ENCODE measurements at regions of chr5 and their contacts with region 1.

Region 1: DNA sequence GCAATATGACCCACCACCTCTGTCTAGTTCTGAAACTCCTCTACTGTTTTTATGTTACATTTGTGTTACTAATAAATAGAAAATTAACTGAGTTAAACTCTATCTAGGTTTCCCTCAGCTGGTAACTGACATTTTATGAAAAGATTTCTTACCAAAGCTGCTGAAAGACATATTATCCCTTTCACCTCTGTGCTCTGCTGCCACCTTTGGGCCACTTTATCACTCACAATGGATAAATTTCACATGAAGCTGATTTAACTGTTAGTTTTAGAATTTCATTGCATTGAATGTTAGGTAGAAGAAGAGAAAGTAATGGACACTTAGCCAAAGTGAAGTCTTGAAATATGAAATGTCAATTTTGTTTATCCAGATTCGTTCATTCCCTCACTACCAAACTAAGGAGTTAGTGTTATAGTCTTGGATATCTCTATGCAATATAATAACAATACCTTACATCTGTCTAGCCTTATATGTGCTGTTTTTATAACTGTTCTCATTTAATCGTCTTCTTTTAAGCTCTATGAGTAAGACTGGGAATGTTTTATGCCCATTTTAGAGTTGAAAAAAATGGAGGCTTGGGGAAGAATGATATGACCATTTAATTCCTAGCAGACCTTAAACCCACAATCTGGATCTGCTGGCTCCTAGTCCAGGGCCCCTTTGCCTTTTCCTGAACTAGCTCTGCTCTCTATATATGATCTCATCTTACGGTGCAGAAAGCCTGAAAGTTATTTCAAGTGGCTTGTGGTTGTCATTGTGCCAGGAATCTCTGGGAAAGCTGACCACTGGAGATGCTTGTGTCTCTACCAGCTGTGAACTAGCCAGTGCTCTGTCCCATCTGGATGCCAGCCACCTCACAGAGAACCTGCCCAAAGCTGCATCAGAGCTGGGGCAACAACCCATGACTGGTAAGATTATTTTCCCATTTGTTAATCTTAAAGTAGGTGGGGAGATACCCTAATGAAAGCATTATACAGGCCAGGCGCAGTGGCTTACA is 97.1 kb downstream of the GOLPH3 start:
- DNase-seq: peak; percentile 10
- H3K4me3 ChIP-seq: no peak overlapping the region
- H3K27ac ChIP-seq: no peak overlapping the region
- H3K27me3 ChIP-seq: peaks cover 9% of the 10 kb centered on the region
- CTCF ChIP-seq: peak; percentile 82

Region 2: DNA sequence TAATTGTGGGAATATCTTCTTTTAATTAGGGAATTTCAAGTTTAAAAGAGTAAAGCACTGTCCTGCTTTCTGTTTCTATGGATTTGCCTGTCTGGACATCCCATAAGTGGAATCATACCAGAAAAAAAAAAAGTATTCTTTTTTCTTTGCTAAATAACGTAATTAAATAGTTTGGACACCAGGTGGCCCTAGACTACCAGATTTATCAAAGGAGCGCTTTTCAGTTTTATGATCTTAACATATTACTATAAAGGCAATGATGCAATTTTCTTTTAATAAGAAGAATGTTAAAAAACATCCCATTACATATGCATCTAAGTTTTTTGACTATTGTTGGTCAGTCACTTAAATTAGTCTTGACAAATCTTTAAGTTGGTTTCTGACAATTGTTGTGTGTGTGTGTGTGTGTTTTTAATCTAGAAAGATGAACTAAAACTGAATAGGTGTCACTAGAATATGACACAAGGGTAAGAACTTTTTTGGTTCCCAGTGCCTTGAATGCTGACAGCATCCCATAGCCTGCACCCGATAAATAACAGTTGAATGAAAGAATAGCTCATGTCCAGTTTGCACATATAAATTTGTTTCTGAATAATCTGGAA is 495.4 kb before region 1 on chr5:
- CTCF ChIA-PET with region 1: interaction called, 12 read pairs
- POLR2A ChIA-PET with region 1: no interaction called
- DNase-seq: no peak
- H3K4me3 ChIP-seq: no peak overlapping the region
- H3K27ac ChIP-seq: no peak overlapping the region
- H3K27me3 ChIP-seq: peaks cover 10% of the 10 kb centered on the region
- CTCF ChIP-seq: peak; percentile 50

Region 3: DNA sequence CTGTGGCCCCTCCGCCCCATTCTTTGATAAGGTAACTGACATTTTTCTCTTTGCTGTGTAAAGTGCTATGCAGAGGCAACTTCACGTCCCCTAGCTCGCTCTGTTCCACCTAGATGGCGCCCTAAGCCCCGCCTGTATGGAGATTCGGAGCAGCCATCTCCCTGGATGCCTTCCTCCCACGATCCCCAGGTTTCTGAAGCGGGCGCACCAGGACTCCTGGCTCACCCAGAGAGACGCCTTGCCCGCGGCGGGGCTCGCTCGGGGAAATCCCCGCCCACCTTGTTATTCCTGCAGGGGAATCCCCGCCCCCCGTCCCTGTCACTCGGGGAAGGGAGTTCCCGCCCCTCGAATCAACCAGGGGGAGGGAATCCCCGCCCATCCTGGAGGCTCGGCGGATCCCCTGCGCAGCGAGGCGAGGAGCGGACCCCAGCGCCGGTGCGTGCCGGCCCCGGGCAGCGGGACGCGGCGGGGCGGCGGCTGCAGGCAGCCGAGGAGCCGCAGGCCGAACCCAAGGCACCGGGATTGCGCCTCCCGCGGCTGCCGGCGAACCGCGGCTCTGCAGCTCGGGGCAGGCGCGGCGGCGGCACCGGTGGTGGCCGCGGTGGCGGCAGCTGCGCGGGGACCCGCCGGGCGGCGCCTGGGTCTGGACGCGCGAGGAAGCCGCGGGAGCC is 438.1 kb before region 1 on chr5 and contains the start of gene PDZD2:
- CTCF ChIA-PET with region 1: interaction called, 10 read pairs
- POLR2A ChIA-PET with region 1: no interaction called
- DNase-seq: peak; percentile 4
- H3K4me3 ChIP-seq: peak within 1 kb of the TSS; percentile 60
- H3K27ac ChIP-seq: no peak within 1 kb of the TSS
- H3K27me3 ChIP-seq: peaks cover 34% of the 10 kb centered on the region
- CTCF ChIP-seq: peak; percentile 49
- polyA plus RNA-seq, gene PDZD2: 0.26 and 0.40 TPM in 2 replicates

Region 4: DNA sequence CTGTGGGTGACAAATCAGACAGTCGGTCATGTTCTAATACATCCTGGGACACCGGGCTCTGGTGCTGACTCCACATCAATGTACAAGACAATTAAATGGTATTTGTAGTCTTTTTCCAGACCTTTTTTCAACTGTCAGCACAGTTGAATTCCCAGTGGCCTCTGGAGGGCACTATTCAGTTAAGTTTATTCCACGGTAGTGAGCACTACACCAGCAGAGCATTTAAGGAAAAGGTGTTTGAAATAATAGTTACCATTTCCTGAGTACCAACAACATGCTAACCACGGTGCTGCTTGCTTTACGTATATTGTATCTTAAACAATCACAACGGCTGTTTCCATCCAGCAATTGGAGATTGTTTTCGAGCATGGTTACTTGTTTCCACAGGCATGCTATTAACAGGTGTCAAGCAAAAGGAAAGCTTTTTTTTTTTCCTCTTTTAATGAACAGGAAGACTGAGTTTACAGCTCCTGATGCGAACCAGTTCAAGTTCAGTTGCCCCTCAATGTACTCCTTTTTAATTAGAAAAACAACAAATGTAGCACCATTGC is 251.4 kb before region 1 on chr5:
- CTCF ChIA-PET with region 1: interaction called, 93 read pairs
- POLR2A ChIA-PET with region 1: no interaction called
- DNase-seq: peak; percentile 10
- H3K4me3 ChIP-seq: no peak overlapping the region
- H3K27ac ChIP-seq: no peak overlapping the region
- H3K27me3 ChIP-seq: peaks cover 3% of the 10 kb centered on the region
- CTCF ChIP-seq: peak; percentile 69

Region 5: GRCh38 chr5:31934156-31934555 is 142.8 kb before region 1 on chr5:
- CTCF ChIA-PET with region 1: interaction called, 13 read pairs
- POLR2A ChIA-PET with region 1: no interaction called
- DNase-seq: no peak
- H3K4me3 ChIP-seq: no peak overlapping the region
- H3K27ac ChIP-seq: no peak overlapping the region
- H3K27me3 ChIP-seq: peaks cover 19% of the 10 kb centered on the region
- CTCF ChIP-seq: no peak

Region 6: DNA sequence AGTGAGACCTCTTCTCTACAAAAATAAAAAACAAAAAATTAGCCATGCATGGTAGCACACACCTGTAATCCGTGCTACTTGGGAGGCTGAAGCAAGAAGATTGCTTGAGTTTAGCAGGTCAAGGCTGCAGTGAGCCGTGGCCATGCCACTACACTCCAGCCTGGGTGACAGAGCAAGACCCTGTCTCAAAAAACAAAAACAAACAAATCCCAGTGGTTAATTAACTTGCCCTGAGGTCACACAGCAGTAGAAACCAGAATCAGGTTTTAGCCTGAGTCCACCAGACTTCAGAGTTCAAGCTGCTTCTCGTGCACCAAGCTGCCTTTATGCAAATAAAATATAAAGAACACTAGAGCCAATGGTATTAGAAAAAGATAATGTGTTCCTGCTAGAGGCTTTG is 72.6 kb before region 1 on chr5:
- CTCF ChIA-PET with region 1: no interaction called
- POLR2A ChIA-PET with region 1: no interaction called
- DNase-seq: no peak
- H3K4me3 ChIP-seq: no peak overlapping the region
- H3K27ac ChIP-seq: no peak overlapping the region
- H3K27me3 ChIP-seq: no peaks in the 10 kb centered on the region
- CTCF ChIP-seq: no peak

Region 7: DNA sequence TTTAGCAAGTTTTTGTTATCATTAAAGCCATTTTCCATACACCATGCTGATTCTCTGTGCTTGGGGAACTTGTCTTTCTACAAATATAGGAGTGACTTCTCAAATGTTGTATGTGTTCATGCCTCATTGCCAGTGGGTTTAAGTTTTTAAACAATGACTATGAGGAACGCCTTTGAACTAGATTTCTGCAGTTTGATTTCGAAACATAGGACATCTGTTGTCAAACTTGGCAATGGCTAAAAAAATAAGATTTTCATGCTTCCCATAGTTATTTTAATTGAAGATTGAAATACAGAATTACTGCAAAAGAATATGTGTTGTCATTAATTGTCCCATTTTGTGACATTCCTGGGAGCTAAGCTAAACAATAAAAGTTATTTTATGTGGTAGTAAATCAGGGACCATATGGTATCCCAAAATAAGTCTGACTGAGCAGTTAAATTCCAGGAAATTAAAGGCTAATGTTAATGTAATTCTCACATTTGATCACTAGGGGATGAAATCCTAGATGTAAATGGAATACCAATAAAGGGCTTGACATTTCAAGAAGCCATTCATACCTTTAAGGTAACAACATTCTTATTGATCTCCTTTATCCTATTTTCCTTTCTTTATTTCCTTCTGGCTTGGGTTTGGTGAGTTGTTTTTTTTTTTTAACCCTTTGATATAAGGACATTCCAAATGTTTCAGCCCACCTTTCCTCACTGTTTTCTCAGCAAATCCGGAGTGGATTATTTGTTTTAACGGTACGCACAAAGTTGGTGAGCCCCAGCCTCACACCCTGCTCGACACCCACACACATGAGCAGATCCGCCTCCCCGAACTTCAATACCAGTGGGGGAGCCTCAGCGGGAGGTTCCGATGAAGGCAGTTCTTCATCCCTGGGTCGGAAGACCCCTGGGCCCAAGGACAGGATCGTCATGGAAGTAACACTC is 19.6 kb before region 1 on chr5:
- CTCF ChIA-PET with region 1: interaction called, 11 read pairs
- POLR2A ChIA-PET with region 1: no interaction called
- DNase-seq: no peak
- H3K4me3 ChIP-seq: no peak overlapping the region
- H3K27ac ChIP-seq: no peak overlapping the region
- H3K27me3 ChIP-seq: peaks cover 12% of the 10 kb centered on the region
- CTCF ChIP-seq: peak; percentile 29; the same call in 1 of the 2 replicates

Region 8: DNA sequence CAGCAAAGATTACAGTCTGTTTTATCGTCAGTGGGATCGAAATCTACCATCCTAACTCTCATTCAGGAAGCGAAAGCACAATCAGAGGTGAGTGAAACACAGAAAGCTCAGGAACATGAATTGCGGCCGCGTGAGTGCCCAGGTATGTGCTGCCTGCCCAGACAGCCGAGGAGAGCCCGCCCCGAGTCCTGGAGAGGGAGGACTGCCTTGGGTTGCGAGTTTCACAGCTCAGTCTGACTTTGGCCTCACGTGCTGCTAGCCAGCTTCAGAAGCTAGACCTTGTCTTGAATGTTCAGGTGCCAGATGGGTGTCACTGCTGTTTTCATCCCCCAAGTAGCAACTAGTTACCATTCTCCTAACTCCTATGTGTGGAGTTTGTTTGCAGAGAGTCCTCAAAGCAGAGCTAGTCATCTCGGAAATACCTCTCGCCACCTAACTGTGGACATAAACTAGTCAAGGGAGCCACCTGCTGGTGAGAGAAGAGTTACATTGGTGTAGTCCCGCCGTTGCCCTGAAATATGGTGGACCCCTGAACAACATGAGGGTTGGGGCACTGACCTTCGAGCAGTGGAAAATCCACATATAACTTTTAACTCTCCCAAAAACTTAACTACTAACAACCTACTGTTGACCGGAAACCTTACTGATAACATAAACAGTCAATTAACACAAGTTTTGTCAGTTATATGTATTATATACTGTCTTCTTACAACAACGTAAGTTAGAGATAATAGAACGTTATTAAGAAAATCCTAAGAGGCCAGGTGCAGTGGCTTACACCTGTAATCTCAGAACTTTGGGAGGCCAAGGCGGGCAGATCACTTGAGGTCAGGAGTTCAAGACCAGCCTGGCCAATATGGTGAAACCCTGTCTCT is 16.2 kb after region 1 on chr5:
- CTCF ChIA-PET with region 1: interaction called, 11 read pairs
- POLR2A ChIA-PET with region 1: no interaction called
- DNase-seq: peak; percentile 38
- H3K4me3 ChIP-seq: no peak overlapping the region
- H3K27ac ChIP-seq: no peak overlapping the region
- H3K27me3 ChIP-seq: no peaks in the 10 kb centered on the region
- CTCF ChIP-seq: peak; percentile 83